ENCODE measurements at regions of chr5 and their contacts with region 1.

Region 1: GRCh38 chr5:132495667-132496190 is 5.2 kb upstream of the IRF1 start:
- DNase-seq: no peak
- ATAC-seq: peak; percentile 69
- H3K4me3 ChIP-seq: peak overlapping the region; percentile 85
- H3K27ac ChIP-seq: peak overlapping the region; percentile 63
- H3K4me1 ChIP-seq: peaks cover 49% of the 10 kb centered on the region
- H3K27me3 ChIP-seq: no peaks in the 10 kb centered on the region
- CTCF ChIP-seq: 0 out of 6 replicates have a peak, but pooled peaks of 1 of the 3 experiments have one; percentile 7
- EP300 ChIP-seq: peak in 1 of 2 experiments; percentile 38; a peak in 2 of 4 replicates
- POLR2A ChIP-seq: peak; percentile 48; the same call in 1 of the 2 replicates
- RAD21 ChIP-seq: no peak

Region 2: GRCh38 chr5:132419502-132420468 is 75.9 kb before region 1 on chr5:
- CTCF ChIA-PET with region 1: interaction called, 184 read pairs
- POLR2A ChIA-PET with region 1: interaction called, 389 read pairs
- RAD21 ChIA-PET with region 1: interaction called, 453 read pairs
- SMC1A ChIA-PET with region 1: interaction called, 162 read pairs
- in situ Hi-C with region 1: no loop called
- intact Hi-C with region 1: loop called (anchors 1 kb)
- DNase-seq: no peak
- ATAC-seq: peak; percentile 50
- H3K4me3 ChIP-seq: peak overlapping the region; percentile 31; the same call in 1 of the 2 replicates
- H3K27ac ChIP-seq: peak overlapping the region; percentile 94
- H3K4me1 ChIP-seq: peaks cover 79% of the 10 kb centered on the region
- H3K27me3 ChIP-seq: no peaks in the 10 kb centered on the region
- CTCF ChIP-seq: peak; percentile 74 to 81 (median 80)
- EP300 ChIP-seq: no peak
- POLR2A ChIP-seq: no peak
- RAD21 ChIP-seq: peak; percentile 78

Region 3: DNA sequence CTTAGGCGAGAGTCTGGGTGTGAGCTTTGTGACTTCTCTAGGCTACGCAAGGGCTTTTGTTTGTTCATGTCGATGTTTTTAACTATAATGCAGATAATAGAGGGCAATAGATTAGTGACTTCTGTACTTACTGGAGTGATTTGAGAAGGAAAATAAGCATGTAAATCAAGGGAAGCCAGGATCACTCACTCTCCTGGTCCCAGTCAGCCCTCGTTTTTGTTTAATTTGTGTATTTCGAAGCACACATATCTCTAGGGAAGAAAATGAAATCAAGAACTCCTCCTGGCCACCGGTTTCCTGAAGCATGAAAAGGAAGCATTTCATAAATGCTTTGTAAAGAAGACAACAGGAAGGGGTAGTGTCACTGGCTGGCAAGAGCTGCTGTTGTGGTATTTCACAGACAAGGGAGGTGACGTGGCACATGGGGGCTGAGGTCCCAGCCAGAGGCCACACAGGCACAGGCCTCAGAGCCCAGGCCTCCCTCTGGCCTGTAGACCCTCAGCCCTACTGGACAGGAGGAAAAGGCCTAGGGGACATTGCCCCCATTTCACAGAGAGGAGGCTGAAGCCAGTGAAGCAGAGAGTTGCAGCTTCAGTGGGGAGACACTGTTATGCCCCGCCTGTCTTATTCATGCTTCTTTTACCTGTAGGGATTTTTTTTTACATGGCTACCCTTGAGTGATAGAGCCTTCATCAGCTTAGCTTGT is 39.3 kb before region 1 on chr5:
- CTCF ChIA-PET with region 1: interaction called, 25 read pairs
- POLR2A ChIA-PET with region 1: interaction called, 73 read pairs
- RAD21 ChIA-PET with region 1: interaction called, 89 read pairs
- SMC1A ChIA-PET with region 1: interaction called, 85 read pairs
- in situ Hi-C with region 1: no loop called
- intact Hi-C with region 1: loop called (anchors 5 kb)
- DNase-seq: peak; percentile 73
- ATAC-seq: peak; percentile 78
- H3K4me3 ChIP-seq: peak overlapping the region; percentile 2; the same call in 1 of the 2 replicates
- H3K27ac ChIP-seq: peak overlapping the region; percentile 89
- H3K4me1 ChIP-seq: peaks cover 63% of the 10 kb centered on the region
- H3K27me3 ChIP-seq: no peaks in the 10 kb centered on the region
- CTCF ChIP-seq: no peak
- EP300 ChIP-seq: peak in 1 of 2 experiments; percentile 23; a peak in 1 of 4 replicates
- POLR2A ChIP-seq: no peak
- RAD21 ChIP-seq: no peak

Region 4: GRCh38 chr5:132479111-132479951 is 16.4 kb before region 1 on chr5:
- CTCF ChIA-PET with region 1: interaction called, 40 read pairs
- POLR2A ChIA-PET with region 1: interaction called, 178 read pairs
- RAD21 ChIA-PET with region 1: interaction called, 29 read pairs
- SMC1A ChIA-PET with region 1: interaction called, 63 read pairs
- in situ Hi-C with region 1: no loop called
- intact Hi-C with region 1: no loop called
- DNase-seq: no peak
- ATAC-seq: peak; percentile 53
- H3K4me3 ChIP-seq: no peak overlapping the region
- H3K27ac ChIP-seq: peak overlapping the region; percentile 20
- H3K4me1 ChIP-seq: peaks cover 29% of the 10 kb centered on the region
- H3K27me3 ChIP-seq: no peaks in the 10 kb centered on the region
- CTCF ChIP-seq: no peak
- EP300 ChIP-seq: no peak
- POLR2A ChIP-seq: no peak; the same call in 1 of the 2 replicates
- RAD21 ChIP-seq: no peak

Region 5: GRCh38 chr5:132589467-132589866 is 93.7 kb after region 1 on chr5:
- CTCF ChIA-PET with region 1: no interaction called
- POLR2A ChIA-PET with region 1: no interaction called
- RAD21 ChIA-PET with region 1: no interaction called
- SMC1A ChIA-PET with region 1: no interaction called
- in situ Hi-C with region 1: no loop called
- intact Hi-C with region 1: no loop called
- DNase-seq: no peak
- ATAC-seq: no peak
- H3K4me3 ChIP-seq: no peak overlapping the region
- H3K27ac ChIP-seq: no peak overlapping the region
- H3K4me1 ChIP-seq: no peaks in the 10 kb centered on the region
- H3K27me3 ChIP-seq: no peaks in the 10 kb centered on the region
- CTCF ChIP-seq: no peak
- EP300 ChIP-seq: no peak
- POLR2A ChIP-seq: no peak
- RAD21 ChIP-seq: no peak

Region 6: GRCh38 chr5:132653716-132654115 is 158.0 kb after region 1 on chr5:
- CTCF ChIA-PET with region 1: no interaction called
- POLR2A ChIA-PET with region 1: no interaction called
- RAD21 ChIA-PET with region 1: no interaction called
- SMC1A ChIA-PET with region 1: no interaction called
- in situ Hi-C with region 1: no loop called
- intact Hi-C with region 1: no loop called
- DNase-seq: no peak
- ATAC-seq: no peak
- H3K4me3 ChIP-seq: no peak overlapping the region
- H3K27ac ChIP-seq: no peak overlapping the region
- H3K4me1 ChIP-seq: peaks cover 19% of the 10 kb centered on the region
- H3K27me3 ChIP-seq: no peaks in the 10 kb centered on the region
- CTCF ChIP-seq: no peak
- EP300 ChIP-seq: no peak
- POLR2A ChIP-seq: no peak
- RAD21 ChIP-seq: no peak